ENCODE measurements at regions of chr20 and their contacts with region 1.

Region 1: GRCh38 chr20:43537921-43538877 is 20.6 kb upstream of the SGK2 start:
- DNase-seq: peak; percentile 68
- H3K4me3 ChIP-seq: no peak overlapping the region
- H3K27ac ChIP-seq: no peak overlapping the region
- H3K4me1 ChIP-seq: no peaks in the 10 kb centered on the region
- H3K27me3 ChIP-seq: no peaks in the 10 kb centered on the region
- CTCF ChIP-seq: peak; percentile 94

Region 2: GRCh38 chr20:43681468-43681942 is 143.3 kb after region 1 on chr20:
- CTCF ChIA-PET with region 1: no interaction called
- POLR2A ChIA-PET with region 1: no interaction called
- intact Hi-C with region 1: loop called (anchors 10 kb)
- DNase-seq: peak; percentile 51
- H3K4me3 ChIP-seq: no peak overlapping the region
- H3K27ac ChIP-seq: no peak overlapping the region
- H3K4me1 ChIP-seq: peaks cover 4% of the 10 kb centered on the region
- H3K27me3 ChIP-seq: no peaks in the 10 kb centered on the region
- CTCF ChIP-seq: no peak

Region 3: DNA sequence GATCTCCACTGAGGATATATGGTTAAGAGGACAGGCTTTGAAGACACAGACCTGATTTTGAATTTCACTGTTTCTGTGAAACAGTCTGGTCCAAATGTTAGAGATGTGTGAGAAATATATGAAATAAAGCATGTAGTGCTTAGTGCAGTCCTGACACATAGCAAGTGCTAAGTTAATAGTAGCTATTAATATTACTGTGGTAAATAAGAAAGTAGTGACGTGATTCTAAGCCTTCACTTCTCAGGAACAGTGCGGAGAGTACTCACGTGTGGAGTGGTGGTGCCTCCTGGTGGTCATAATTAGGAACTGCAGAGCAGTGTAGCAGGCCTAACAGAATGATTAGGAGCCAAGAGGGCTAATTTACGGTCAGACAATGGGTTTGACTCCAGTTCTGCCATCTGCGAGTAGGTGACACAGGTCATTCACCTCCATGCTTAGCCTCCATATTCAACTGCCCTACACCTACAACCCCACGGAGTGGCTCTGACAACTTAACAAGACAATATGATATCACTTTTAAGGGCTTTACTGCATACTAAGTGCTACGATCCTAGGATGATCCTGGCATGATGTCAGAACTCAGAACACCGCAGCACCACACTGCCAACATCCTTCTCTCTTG is 542.6 kb after region 1 on chr20:
- CTCF ChIA-PET with region 1: interaction called, 3 read pairs
- POLR2A ChIA-PET with region 1: no interaction called
- intact Hi-C with region 1: loop called (anchors 1 kb)
- DNase-seq: peak; percentile 84
- H3K4me3 ChIP-seq: no peak overlapping the region
- H3K27ac ChIP-seq: peak overlapping the region; percentile 4
- H3K4me1 ChIP-seq: peaks cover 6% of the 10 kb centered on the region
- H3K27me3 ChIP-seq: no peaks in the 10 kb centered on the region
- CTCF ChIP-seq: peak; percentile 98

Region 4: DNA sequence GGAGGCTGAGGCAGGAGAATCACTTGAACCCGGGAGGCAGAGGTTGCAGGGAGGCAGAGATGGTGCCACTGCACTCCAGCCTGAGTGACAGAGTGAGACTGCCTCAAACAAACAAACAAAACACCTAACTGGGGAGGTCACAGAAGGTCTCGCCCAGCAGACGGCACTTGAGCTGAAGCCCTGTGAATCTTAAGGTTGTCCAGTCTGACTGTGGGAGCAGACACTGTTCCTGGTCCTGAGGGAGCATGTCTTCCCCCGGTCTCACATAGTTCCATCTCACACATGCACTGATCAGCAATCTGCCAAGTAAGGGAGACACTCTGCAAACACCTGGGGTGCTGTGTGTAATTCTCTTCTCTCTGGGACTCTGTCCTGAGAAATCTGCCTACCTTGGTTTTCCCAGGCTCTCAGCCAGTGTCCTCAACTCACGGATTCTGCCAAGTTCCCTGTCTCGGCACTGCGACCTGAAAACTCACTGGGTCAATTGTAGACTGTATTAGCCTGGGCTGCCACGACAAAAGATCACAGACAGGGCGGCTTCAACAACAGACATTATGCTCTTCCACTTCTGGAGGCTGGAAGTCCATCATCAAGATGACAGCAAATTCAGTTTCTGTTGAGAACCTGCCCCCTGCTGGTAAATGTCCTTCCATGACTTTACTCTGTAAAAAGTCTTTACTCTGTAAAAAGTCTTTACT is 554.5 kb after region 1 on chr20:
- CTCF ChIA-PET with region 1: interaction called, 3 read pairs
- POLR2A ChIA-PET with region 1: no interaction called
- intact Hi-C with region 1: loop called (anchors 5 kb)
- DNase-seq: peak; percentile 76
- H3K4me3 ChIP-seq: no peak overlapping the region
- H3K27ac ChIP-seq: no peak overlapping the region
- H3K4me1 ChIP-seq: no peaks in the 10 kb centered on the region
- H3K27me3 ChIP-seq: no peaks in the 10 kb centered on the region
- CTCF ChIP-seq: peak; percentile 75

Region 5: DNA sequence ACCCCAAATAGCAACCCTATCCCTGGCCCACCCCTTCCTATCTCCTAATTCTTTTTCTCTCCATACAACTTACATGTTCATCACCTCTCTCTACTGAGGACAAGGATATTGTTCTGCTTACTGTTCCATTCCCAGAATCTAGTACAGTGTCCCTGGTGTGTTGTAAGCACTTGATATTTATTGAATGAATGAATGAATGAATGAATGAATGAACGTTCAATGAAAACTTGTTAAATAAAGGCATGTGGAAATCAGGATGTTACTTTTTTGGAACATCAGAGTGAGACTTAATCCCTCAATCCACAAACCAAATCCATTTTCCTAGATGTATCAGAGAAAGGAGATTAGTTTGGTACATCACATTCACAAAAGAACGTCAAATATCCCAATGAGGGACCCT is 655.6 kb after region 1 on chr20:
- CTCF ChIA-PET with region 1: interaction called, 3 read pairs
- POLR2A ChIA-PET with region 1: no interaction called
- intact Hi-C with region 1: loop called (anchors 5 kb)
- DNase-seq: no peak
- H3K4me3 ChIP-seq: no peak overlapping the region
- H3K27ac ChIP-seq: no peak overlapping the region
- H3K4me1 ChIP-seq: no peaks in the 10 kb centered on the region
- H3K27me3 ChIP-seq: no peaks in the 10 kb centered on the region
- CTCF ChIP-seq: no peak